ENCODE measurements at regions of chr1 and their contacts with region 1.

Region 1: DNA sequence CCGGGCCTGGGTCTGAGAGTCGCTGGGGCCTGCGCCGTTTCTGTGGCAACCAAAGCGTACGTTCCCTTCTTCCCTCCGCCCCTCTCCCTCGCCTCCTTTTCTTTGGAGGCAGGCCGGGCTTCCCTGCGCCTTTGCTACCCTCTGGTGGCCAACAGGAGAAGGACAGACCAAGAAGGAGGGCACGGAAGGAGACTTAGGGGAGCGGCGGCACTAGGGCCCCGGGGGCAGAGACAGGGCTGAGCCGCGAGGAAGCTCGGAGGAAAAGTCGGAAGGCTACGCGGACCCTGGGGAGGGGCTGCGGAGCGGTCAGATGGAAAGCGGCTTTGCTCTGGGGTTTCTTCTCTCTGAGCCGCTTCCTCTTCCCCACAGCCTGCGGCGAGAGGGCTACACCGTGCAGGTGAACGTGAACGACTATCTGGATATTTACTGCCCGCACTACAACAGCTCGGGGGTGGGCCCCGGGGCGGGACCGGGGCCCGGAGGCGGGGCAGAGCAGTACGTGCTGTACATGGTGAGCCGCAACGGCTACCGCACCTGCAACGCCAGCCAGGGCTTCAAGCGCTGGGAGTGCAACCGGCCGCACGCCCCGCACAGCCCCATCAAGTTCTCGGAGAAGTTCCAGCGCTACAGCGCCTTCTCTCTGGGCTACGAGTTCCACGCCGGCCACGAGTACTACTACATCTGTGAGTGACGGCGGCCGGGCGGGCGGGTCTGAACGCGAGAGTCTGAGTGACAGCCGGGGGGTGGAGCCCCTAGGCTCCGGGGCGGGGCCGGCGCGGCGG is 6.3 kb downstream of the EFNA3 start:
- DNase-seq: peak; percentile 94 to 97
- H3K4me3 ChIP-seq: peak overlapping the region; percentile 66
- H3K4me1 ChIP-seq: peaks cover 17% of the 10 kb centered on the region
- H3K27me3 ChIP-seq: no peaks in the 10 kb centered on the region

Region 2: GRCh38 chr1:155022927-155023236 is 62.0 kb before region 1 on chr1:
- in situ Hi-C with region 1: loop called (anchors 10 kb)
- DNase-seq: no peak
- H3K4me3 ChIP-seq: no peak overlapping the region
- H3K4me1 ChIP-seq: no peaks in the 10 kb centered on the region; the same call in 1 of the 2 replicates
- H3K27me3 ChIP-seq: no peaks in the 10 kb centered on the region

Region 3: GRCh38 chr1:155044812-155045690 is 39.9 kb before region 1 on chr1:
- in situ Hi-C with region 1: loop called (anchors 5 kb)
- DNase-seq: peak; percentile 61 to 79
- H3K4me3 ChIP-seq: no peak overlapping the region
- H3K4me1 ChIP-seq: peaks cover 18% of the 10 kb centered on the region
- H3K27me3 ChIP-seq: no peaks in the 10 kb centered on the region